ENCODE measurements at regions of chr21 and their contacts with region 1.

Region 1: GRCh38 chr21:35582731-35583130 is 477.6 kb downstream of the SETD4 start:
- DNase-seq: no peak
- ATAC-seq: no peak
- H3K4me3 ChIP-seq: no peak overlapping the region
- H3K27ac ChIP-seq: no peak overlapping the region
- H3K4me1 ChIP-seq: no peaks in the 10 kb centered on the region
- H3K27me3 ChIP-seq: peaks cover 0 to 7% (median 0%) of the 10 kb centered on the region in 3 donors
- CTCF ChIP-seq: no peak

Region 2: GRCh38 chr21:35563885-35564451 is 18.8 kb before region 1 on chr21:
- intact Hi-C with region 1: loop called in 1 of 2 experiments (anchors 2 kb)
- DNase-seq: peak; percentile 64 to 76
- ATAC-seq: peak; percentile 13 to 55 (median 41)
- H3K4me3 ChIP-seq: no peak overlapping the region
- H3K27ac ChIP-seq: no peak overlapping the region
- H3K4me1 ChIP-seq: no peaks in the 10 kb centered on the region
- H3K27me3 ChIP-seq: peaks cover 0 to 3% (median 3%) of the 10 kb centered on the region in 3 donors
- CTCF ChIP-seq: no peak